Right ventricle myocardium superior (tissue), 1 donor: ENCODE measurements at regions of chr2 and their contacts with region 1.

Region 1: DNA sequence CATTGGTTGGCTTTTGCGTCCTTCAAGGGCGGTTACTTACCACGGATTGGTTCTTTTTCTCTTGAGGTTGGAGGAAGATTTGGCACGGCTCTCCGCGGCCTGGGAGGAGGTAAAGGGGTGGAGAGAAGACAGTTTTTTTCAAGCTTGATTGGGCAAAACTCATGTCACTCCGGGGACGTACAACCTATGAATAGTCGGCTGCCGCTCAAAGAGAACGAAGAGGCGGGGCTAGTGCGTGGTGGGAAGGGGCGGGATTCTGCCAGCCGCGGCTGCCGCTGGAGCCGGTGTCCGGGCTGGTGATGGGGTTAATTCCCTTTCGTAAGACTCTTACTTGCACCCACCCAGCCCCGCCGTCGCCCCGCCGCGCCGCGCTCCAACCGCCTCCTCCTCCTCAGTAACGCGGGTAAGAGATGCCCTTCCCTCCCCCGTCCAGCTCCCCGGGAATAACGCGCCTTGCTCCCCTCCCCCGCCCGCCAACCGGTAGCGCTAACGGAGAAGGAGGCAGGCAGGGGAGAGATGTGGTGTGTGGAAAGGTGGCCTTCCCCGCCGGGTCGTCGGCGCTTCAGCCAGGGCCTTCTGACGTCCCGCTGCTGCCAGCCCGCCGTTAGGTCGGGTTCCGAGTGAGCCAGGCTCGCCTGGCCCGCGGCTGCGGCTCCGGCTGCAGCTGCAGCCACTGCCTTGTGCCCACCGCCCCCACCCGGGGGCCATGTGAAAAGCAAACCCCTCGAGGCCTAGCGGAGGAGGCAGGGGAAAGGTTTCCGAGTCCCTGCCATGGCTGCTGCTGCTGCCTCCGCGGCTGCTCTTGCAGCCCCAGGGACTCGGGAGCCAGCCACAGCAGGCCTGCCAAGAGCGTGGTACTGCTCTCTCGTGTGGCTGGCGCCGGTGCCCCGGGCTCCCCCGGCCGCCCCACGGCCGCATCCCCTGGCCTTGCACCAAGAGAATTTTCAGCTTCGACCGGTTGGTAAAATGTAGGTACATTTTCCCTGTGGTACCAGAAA is at the start of gene R3HDM1:
- DNase-seq: peak; percentile 96
- ATAC-seq: peak; percentile 96
- total RNA-seq, gene R3HDM1: 12.5 TPM

Region 2: GRCh38 chr2:134570676-134571075 is 960.9 kb before region 1 on chr2:
- intact Hi-C with region 1: no loop called
- DNase-seq: no peak
- ATAC-seq: no peak

Region 3: GRCh38 chr2:134918526-134919340 is 612.8 kb before region 1 on chr2 and contains the start of gene CCNT2:
- intact Hi-C with region 1: loop called (anchors 5 kb)
- DNase-seq: peak; percentile 99
- ATAC-seq: peak; percentile 93
- total RNA-seq, gene CCNT2: 16.6 TPM

Region 4: DNA sequence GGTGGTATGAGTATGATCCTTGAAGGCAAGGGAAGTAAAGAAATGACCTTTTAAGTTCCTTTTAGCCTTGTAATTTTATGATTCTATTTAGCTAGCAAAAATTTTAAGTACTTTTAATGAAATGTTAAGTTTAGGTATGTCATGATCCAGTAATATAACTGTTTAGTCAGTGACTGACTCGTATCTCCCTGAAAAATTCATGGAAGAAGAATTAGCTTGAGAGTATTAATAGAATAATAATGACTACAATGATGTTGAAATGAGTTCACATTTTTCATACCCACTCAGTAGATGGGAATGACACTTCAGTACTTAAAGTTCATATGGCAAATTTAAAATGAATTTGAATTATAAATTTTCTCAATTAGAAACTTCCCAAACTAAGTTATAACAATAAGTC is 464.8 kb before region 1 on chr2:
- intact Hi-C with region 1: no loop called
- DNase-seq: no peak
- ATAC-seq: no peak

Region 5: DNA sequence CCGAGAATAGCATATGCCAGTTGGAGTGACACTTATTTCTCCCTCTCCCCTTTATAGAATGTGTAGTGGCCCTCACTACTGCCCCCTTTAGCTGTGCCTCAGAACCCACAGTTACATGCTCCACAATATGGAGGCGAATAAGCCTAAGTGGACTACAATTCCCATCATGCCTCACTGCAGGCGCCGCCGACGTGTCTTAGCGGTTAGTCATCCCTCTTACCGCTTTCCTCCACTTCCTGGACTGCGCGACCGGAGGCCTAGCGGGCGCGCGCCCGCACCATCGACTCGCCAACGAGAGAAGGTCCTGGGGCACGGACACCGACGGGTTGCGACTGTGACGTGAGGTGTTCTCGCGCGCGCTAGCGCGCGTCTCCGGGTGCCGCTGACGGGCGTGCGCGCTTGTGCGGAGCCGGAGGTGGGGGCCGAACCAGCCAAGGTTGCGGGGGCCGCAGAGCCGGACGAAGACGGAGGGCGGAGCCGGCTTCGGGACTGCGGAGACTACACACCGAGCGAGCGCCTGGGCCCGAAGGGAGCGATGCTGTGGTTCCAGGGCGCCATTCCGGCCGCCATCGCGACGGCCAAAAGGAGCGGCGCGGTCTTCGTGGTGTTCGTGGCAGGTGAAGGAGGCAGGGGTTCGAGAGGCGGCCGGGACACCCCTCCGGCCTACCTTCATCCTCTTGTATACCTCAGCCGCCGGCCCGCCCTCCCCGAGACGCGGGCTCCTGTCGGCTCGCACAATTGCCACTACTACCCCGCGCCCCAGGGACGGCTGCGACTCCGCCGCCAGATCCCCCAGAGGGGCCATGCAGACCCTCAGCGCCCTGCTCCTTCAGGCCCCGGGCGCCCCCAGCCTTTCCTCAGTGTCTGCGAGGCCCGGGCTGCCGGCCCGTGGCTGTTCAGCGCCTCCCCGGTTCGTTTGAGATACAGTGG is 210.1 kb after region 1 on chr2 and contains the start of gene UBXN4:
- intact Hi-C with region 1: loop called (anchors 5 kb)
- DNase-seq: peak; percentile 98
- ATAC-seq: peak; percentile 97
- total RNA-seq, gene UBXN4: 62.0 TPM

Region 6: GRCh38 chr2:135798762-135799161 is 267.2 kb after region 1 on chr2:
- intact Hi-C with region 1: no loop called
- DNase-seq: no peak
- ATAC-seq: no peak